ENCODE measurements at regions of chr4 and their contacts with region 1.

Region 1: GRCh38 chr4:81040012-81040659 is 9.6 kb downstream of the BMP3 start:
- DNase-seq: peak in 3 of 14 experiments; percentile 53 to 58 (median 58)
- ATAC-seq: no peak
- H3K4me3 ChIP-seq: no peak overlapping the region
- H3K4me3 Mint-ChIP-seq: no peak overlapping the region
- H3K27ac ChIP-seq: no peak overlapping the region
- H3K27ac Mint-ChIP-seq: no peak overlapping the region
- H3K4me1 ChIP-seq: no peaks in the 10 kb centered on the region
- H3K4me1 Mint-ChIP-seq: no peaks in the 10 kb centered on the region
- H3K27me3 ChIP-seq: peaks cover 0 to 18% of the 10 kb centered on the region in 2 experiments
- H3K27me3 Mint-ChIP-seq: peaks cover 40% of the 10 kb centered on the region
- CTCF ChIP-seq: peak; percentile 63

Region 2: DNA sequence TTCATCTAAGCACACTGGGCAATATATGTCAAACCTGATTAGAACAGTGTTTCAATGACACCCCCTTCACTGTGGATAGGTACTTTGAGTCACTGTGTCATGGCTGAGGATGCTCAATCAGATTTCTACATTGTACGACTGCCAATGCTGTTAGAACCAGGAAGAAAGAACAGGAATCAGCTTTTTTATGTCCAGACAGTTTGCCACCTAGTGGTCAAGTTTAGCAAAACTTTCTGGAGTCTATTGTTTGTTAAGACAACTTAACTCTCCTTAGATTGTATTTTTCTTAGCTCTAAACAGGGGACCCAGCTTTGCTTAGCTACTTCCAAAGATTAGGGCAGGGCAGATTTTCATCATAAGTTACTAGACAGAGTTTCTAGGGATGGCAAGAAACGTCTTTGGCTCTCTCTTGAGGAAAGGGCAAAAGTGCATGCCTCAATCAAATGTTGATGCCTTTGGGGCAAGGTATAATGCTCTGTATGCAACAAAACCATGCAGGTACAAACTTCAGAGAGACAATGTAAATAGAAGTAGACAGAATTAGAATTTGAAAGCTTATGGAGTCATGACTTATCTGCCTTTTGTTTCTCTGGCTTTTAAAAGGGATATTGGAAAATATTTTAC is 50.1 kb before region 1 on chr4:
- CTCF ChIA-PET with region 1: no interaction called
- POLR2A ChIA-PET with region 1: interaction called, 3 read pairs
- intact Hi-C with region 1: loop called (anchors 5 kb)
- DNase-seq: peak in 5 of 14 experiments; percentile 2 to 69 (median 67)
- ATAC-seq: peak; percentile 48
- H3K4me3 ChIP-seq: no peak overlapping the region
- H3K4me3 Mint-ChIP-seq: no peak overlapping the region
- H3K27ac ChIP-seq: no peak overlapping the region
- H3K27ac Mint-ChIP-seq: no peak overlapping the region
- H3K4me1 ChIP-seq: no peaks in the 10 kb centered on the region
- H3K4me1 Mint-ChIP-seq: peaks cover 4% of the 10 kb centered on the region
- H3K27me3 ChIP-seq: peaks cover 3% of the 10 kb centered on the region in 2 experiments
- H3K27me3 Mint-ChIP-seq: peaks cover 19% of the 10 kb centered on the region
- CTCF ChIP-seq: peak; percentile 85

Region 3: GRCh38 chr4:81058621-81059020 is 18.5 kb after region 1 on chr4:
- CTCF ChIA-PET with region 1: no interaction called
- POLR2A ChIA-PET with region 1: no interaction called
- intact Hi-C with region 1: no loop called
- DNase-seq: no peak
- ATAC-seq: no peak
- H3K4me3 ChIP-seq: no peak overlapping the region
- H3K4me3 Mint-ChIP-seq: no peak overlapping the region
- H3K27ac ChIP-seq: no peak overlapping the region
- H3K27ac Mint-ChIP-seq: no peak overlapping the region
- H3K4me1 ChIP-seq: no peaks in the 10 kb centered on the region
- H3K4me1 Mint-ChIP-seq: no peaks in the 10 kb centered on the region
- H3K27me3 ChIP-seq: no peaks in the 10 kb centered on the region
- H3K27me3 Mint-ChIP-seq: peaks cover 26% of the 10 kb centered on the region
- CTCF ChIP-seq: no peak